Activated CD4-positive, alpha-beta T cell treated with anti-CD3 and anti-CD28 coated beads for 36 hours (primary cell): ENCODE measurements at regions of chr4 and their contacts with region 1.

Region 1: DNA sequence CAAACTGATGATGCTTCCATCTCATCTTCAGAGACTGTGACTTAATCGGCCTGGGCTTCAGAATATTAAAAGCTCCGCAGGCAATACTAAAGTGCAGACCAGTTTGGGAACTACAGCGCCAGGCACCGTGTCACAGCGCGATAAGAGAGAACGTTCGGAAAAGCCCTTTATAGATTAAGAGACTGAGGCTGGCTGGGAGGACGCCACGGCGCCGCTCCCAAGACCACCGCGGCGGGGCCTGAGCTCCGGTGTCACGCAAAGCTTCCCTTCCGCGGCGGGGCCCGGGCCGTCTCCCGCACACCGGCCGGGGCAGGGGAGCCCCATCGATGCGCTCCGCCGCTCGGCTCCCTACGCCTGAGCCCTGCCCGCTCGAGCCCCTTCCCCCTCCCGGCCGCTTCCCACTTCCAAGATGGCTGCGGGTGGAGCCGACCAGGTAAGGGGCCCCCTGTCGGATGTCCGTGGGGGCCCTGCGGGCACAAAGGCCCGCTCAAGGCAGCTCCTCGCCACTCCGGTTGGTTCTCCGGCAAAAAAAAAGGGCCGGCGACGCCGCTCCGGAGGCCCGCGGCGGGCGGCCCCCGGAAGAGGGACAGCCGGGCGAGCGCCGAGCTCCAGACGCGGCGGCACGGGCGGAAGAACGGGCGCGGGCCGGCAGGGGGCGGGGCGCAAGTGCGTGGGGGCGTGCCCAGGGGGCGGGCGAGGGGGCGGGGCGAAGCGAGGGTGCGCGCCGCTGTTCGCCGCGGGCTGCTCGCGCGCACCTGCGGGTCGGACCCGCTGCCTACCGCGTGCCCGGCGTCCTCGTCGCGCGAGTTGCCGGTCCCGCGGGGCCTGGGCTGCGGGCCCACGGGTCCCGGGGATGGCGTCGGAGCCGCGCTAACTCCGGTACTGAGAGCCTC is at the start of gene TBC1D14:
- DNase-seq: peak; percentile 92
- ATAC-seq: peak; percentile 89
- H3K4me3 Mint-ChIP-seq: peak within 1 kb of the TSS; percentile 94
- H3K27ac Mint-ChIP-seq: peak within 1 kb of the TSS; percentile 90
- H3K4me1 Mint-ChIP-seq: peaks cover 44% of the 10 kb centered on the region
- H3K27me3 Mint-ChIP-seq: peaks cover 3% of the 10 kb centered on the region
- total RNA-seq, gene TBC1D14: 36.7 to 44.0 TPM

Region 2: DNA sequence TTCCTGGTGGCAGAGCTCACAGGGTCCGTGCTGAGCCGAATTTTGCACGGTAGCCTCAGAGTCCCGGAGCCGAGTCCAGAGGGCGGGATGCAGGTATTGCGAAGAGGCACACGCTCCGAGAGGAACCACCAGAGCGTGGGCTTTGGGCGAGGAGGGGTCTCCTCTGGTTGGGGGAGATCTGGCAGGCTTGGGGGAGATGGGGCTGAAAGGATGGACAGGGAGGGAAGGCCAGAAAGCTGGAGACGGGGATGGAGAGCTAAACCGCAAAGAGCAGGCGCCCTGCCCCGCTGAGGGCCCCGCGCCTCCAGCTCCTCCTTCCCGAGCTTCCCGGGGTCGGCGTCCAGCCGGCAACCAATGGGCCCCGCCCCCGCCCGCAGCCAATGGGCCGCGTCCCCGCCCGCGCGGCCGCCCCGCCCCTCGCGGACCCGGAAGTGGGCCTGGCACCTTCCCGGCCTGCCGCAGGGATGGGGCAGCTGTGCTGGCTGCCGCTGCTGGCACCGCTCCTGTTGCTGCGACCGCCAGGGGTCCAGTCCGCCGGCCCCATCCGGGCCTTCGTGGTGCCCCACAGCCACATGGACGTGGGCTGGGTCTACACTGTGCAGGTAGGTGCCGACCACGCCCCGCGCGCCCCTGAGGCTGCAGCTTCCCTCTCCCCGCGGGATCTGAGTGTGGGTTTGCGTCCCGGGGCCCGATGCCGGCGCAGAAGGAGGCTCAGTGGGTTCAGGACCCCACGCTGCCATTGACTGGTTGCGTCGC is 334.4 kb before region 1 on chr4 and contains the start of gene MAN2B2:
- CTCF ChIA-PET with region 1: no interaction called
- POLR2A ChIA-PET with region 1: no interaction called
- intact Hi-C with region 1: loop called in 1 of 2 experiments (anchors 1 kb)
- DNase-seq: peak; percentile 89
- ATAC-seq: peak; percentile 96
- H3K4me3 Mint-ChIP-seq: peak within 1 kb of the TSS; percentile 78
- H3K27ac Mint-ChIP-seq: peak within 1 kb of the TSS; percentile 74
- H3K4me1 Mint-ChIP-seq: peaks cover 6% of the 10 kb centered on the region
- H3K27me3 Mint-ChIP-seq: no peaks in the 10 kb centered on the region
- total RNA-seq, gene MAN2B2: 13.0 to 14.6 TPM

Region 3: DNA sequence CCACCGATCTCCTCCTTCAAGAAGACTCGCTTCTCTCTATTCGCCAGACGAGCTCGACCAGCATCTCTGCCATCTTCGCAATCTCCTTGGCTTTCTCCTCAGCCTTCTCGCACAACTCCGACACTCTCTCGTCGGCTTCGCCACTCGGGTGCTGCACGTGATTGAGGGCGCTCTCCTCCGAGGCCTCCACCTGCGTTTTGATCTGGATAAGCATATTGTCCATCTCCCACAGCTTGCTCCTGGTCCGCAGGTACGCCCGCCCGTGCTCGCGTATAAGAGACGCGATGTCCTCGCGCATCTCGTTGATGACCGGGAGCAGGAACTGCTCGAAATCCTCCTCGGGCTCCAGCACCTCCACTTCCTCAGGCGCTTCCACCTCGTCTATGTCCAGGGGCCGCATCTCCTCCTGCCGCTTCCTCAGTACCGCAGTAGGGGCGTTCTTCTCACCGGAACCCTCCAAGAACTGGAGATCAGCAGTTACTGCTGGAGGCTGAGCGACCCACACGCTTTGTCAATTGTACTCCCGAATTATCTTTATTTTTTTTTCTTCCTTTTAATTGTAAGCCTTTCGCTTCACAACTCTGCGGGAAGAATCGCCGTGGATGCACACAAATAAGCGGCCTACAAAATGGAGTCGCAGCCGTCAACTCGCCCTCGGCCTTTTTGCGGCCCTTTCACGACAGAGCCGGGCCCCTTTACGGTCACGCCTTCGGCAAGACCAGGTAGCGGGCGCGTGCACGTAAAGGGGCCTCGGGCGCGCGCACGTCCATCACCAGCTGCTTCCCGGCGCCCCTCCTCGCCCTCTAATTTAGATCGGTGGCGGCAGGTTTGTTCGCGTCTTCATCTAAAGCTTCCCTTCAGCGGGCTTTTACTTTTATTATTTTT is 199.8 kb before region 1 on chr4 and contains the start of gene MRFAP1L1:
- CTCF ChIA-PET with region 1: interaction called, 3 read pairs
- POLR2A ChIA-PET with region 1: no interaction called
- intact Hi-C with region 1: loop called in 1 of 2 experiments (anchors 2 kb)
- DNase-seq: peak; percentile 98
- ATAC-seq: peak; percentile 73
- H3K4me3 Mint-ChIP-seq: peak within 1 kb of the TSS; percentile 98
- H3K27ac Mint-ChIP-seq: peak within 1 kb of the TSS; percentile 98
- H3K4me1 Mint-ChIP-seq: peaks cover 46% of the 10 kb centered on the region
- H3K27me3 Mint-ChIP-seq: no peaks in the 10 kb centered on the region
- total RNA-seq, gene MRFAP1L1: 36.4 to 45.0 TPM

Region 4: GRCh38 chr4:6926681-6927478 is 17.6 kb after region 1 on chr4:
- CTCF ChIA-PET with region 1: interaction called, 8 read pairs
- POLR2A ChIA-PET with region 1: interaction called, 3 read pairs
- intact Hi-C with region 1: loop called in 1 of 2 experiments (anchors 2 kb)
- DNase-seq: peak; percentile 72
- ATAC-seq: peak; percentile 67
- H3K4me3 Mint-ChIP-seq: peak overlapping the region; percentile 33
- H3K27ac Mint-ChIP-seq: peak overlapping the region; percentile 78
- H3K4me1 Mint-ChIP-seq: peaks cover 67% of the 10 kb centered on the region
- H3K27me3 Mint-ChIP-seq: no peaks in the 10 kb centered on the region

Region 5: DNA sequence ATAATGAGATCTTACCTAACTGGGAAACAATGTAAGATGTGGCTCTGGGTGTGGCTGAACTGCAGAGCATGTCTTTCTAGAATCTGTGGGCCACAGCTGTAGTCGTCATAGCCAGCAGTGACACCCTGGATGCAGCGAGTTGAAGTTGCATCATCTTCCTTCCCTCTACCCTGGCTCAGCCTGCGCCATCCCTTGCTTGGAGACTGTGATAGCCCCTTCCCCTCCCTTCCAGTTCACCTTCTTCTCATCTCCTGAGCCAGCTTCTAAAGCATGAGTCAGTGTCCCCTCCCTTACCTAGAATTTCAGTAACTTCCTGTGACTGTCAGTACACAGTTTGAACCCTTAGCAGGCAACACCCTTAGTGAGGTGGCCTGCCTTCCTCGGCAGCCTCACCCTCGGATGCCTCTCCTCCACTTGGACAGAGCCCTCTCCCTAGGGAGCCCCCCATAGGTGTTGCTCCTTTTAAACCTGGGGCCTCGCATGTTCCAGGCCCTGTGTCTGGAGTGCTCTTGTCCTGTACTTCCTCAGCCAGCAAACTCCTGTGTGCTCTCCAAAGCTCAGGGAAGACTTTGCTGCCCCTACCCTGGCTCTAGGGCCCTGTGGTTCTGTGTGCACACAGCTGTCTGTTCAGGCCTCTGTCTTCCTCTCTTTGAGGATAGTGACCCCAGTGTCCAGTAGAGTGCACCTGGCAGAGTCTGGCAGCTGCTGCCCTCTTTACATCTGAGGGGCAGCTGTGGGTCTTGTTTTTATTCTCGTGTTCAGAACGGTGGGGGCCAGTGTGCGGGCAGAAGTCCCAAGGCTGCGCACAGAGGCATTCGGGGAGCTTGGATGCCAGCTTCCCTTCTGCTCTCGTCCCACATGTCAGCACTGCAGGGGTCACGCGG is 90.1 kb after region 1 on chr4:
- CTCF ChIA-PET with region 1: no interaction called
- POLR2A ChIA-PET with region 1: no interaction called
- intact Hi-C with region 1: no loop called
- DNase-seq: peak; percentile 49
- ATAC-seq: peak; percentile 92
- H3K4me3 Mint-ChIP-seq: no peak overlapping the region
- H3K27ac Mint-ChIP-seq: peak overlapping the region; percentile 68
- H3K4me1 Mint-ChIP-seq: peaks cover 10% of the 10 kb centered on the region
- H3K27me3 Mint-ChIP-seq: no peaks in the 10 kb centered on the region

Region 6: GRCh38 chr4:7042697-7043464 is 133.6 kb after region 1 on chr4 and contains the start of gene TADA2B:
- CTCF ChIA-PET with region 1: interaction called, 14 read pairs
- POLR2A ChIA-PET with region 1: interaction called, 3 read pairs
- intact Hi-C with region 1: loop called (anchors 1 to 10 kb)
- DNase-seq: peak; percentile 95
- ATAC-seq: peak; percentile 87
- H3K4me3 Mint-ChIP-seq: peak within 1 kb of the TSS; percentile 86
- H3K27ac Mint-ChIP-seq: peak within 1 kb of the TSS; percentile 77
- H3K4me1 Mint-ChIP-seq: peaks cover 46% of the 10 kb centered on the region
- H3K27me3 Mint-ChIP-seq: peaks cover 3% of the 10 kb centered on the region
- total RNA-seq, gene TADA2B: 9.0 to 10.6 TPM

Region 7: GRCh38 chr4:7101692-7102515 is 192.6 kb after region 1 on chr4:
- CTCF ChIA-PET with region 1: interaction called, 3 read pairs
- POLR2A ChIA-PET with region 1: no interaction called
- intact Hi-C with region 1: loop called in 1 of 2 experiments (anchors 1 kb)
- DNase-seq: peak; percentile 78
- ATAC-seq: peak; percentile 74
- H3K4me3 Mint-ChIP-seq: peak overlapping the region; percentile 84
- H3K27ac Mint-ChIP-seq: no peak overlapping the region
- H3K4me1 Mint-ChIP-seq: peaks cover 8% of the 10 kb centered on the region
- H3K27me3 Mint-ChIP-seq: no peaks in the 10 kb centered on the region

Region 8: DNA sequence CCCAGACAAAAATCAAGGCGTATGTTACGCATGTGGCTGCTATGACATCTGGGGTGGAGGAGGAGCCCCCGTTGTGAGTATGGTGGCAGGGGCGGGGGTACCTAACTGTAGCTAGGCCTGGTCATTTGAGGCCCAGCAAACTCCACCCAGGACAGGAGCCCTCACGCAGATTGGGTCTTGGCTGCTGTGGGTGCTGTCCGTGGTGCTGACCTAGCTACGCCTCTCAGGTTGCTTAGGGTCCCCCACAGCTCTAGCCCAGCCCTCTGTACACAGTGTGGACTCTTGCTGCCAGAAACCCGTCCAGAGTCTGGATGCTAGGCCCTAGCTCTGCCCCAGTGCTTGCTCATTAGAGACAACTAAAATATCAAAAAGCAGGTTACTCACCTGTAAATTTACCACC is 672.2 kb after region 1 on chr4:
- CTCF ChIA-PET with region 1: no interaction called
- POLR2A ChIA-PET with region 1: no interaction called
- intact Hi-C with region 1: no loop called
- DNase-seq: peak; percentile 39
- ATAC-seq: no peak
- H3K4me3 Mint-ChIP-seq: no peak overlapping the region
- H3K27ac Mint-ChIP-seq: no peak overlapping the region
- H3K4me1 Mint-ChIP-seq: no peaks in the 10 kb centered on the region
- H3K27me3 Mint-ChIP-seq: peaks cover 2% of the 10 kb centered on the region